Naive thymus-derived CD4-positive, alpha-beta T cell (primary cell): ENCODE measurements at regions of chr12 and their contacts with region 1.

Region 1: GRCh38 chr12:80269803-80270552 is 170.6 kb downstream of the OTOGL start:
- DNase-seq: peak in 3 of 9 donors; percentile 3 to 16 (median 4)
- ATAC-seq: no peak
- H3K4me3 ChIP-seq: no peak overlapping the region
- H3K4me3 Mint-ChIP-seq: no peak overlapping the region
- H3K27ac ChIP-seq: no peak overlapping the region
- H3K27ac Mint-ChIP-seq: no peak overlapping the region
- H3K4me1 ChIP-seq: no peaks in the 10 kb centered on the region
- H3K4me1 Mint-ChIP-seq: no peaks in the 10 kb centered on the region
- H3K27me3 ChIP-seq: no peaks in the 10 kb centered on the region
- H3K27me3 Mint-ChIP-seq: peaks cover 0 to 13% (median 0%) of the 10 kb centered on the region in 5 donors

Region 2: DNA sequence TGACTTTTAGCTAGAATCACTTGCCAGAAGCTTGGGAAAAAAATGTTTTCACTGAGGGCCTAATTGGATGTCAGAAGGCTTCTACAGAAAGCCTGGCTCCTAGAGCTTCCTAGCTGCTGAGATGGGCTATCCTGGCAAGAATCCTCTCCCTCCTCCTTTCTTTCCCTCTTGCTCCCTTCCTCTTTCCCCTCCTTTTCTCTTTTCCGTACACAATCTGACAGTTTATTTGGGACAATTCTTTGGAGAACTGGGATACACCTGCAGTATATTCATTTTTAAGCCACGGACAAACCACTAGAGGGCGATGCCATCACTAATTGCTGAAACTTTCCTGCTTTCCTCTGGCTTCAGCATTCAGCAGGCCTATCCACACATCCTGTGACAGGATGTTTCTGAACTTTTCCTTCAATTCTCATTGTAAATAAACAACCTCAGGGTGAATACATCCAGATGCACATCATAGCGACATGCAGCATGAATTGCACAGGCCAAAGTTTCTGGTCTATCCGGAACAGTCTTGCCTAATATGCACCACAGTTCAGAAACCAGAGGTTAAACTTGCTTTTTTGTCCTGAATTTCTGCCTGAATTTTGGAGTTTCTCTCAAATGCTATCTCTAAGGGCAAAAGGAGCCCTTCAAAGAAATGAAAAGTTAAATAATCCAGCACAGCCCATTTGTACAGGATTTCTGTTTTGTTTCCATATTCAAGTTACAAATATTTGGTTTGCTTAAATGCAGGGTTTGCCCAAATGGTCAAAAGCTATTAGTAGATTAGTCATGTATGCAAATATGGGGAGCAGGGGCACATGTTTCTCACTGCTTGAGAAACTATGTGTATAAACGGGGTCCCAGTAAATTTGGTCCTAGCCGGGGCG is 722.0 kb before region 1 on chr12:
- CTCF ChIA-PET with region 1: interaction called, 3 read pairs
- POLR2A ChIA-PET with region 1: no interaction called
- intact Hi-C with region 1: loop called in 1 of 2 experiments (anchors 2 kb)
- DNase-seq: peak in 2 of 9 donors; percentile 7 to 10
- ATAC-seq: no peak
- H3K4me3 ChIP-seq: no peak overlapping the region
- H3K4me3 Mint-ChIP-seq: no peak overlapping the region
- H3K27ac ChIP-seq: no peak overlapping the region
- H3K27ac Mint-ChIP-seq: no peak overlapping the region
- H3K4me1 ChIP-seq: no peaks in the 10 kb centered on the region
- H3K4me1 Mint-ChIP-seq: no peaks in the 10 kb centered on the region
- H3K27me3 ChIP-seq: no peaks in the 10 kb centered on the region
- H3K27me3 Mint-ChIP-seq: peaks cover 0 to 11% (median 0%) of the 10 kb centered on the region in 5 donors

Region 3: GRCh38 chr12:79555028-79555930 is 714.7 kb before region 1 on chr12:
- CTCF ChIA-PET with region 1: no interaction called
- POLR2A ChIA-PET with region 1: no interaction called
- intact Hi-C with region 1: loop called (anchors 2 kb)
- DNase-seq: peak in 2 of 9 donors; percentile 5 to 9
- ATAC-seq: no peak
- H3K4me3 ChIP-seq: no peak overlapping the region
- H3K4me3 Mint-ChIP-seq: no peak overlapping the region
- H3K27ac ChIP-seq: no peak overlapping the region
- H3K27ac Mint-ChIP-seq: no peak overlapping the region
- H3K4me1 ChIP-seq: no peaks in the 10 kb centered on the region
- H3K4me1 Mint-ChIP-seq: no peaks in the 10 kb centered on the region
- H3K27me3 ChIP-seq: no peaks in the 10 kb centered on the region
- H3K27me3 Mint-ChIP-seq: no peaks in the 10 kb centered on the region

Region 4: DNA sequence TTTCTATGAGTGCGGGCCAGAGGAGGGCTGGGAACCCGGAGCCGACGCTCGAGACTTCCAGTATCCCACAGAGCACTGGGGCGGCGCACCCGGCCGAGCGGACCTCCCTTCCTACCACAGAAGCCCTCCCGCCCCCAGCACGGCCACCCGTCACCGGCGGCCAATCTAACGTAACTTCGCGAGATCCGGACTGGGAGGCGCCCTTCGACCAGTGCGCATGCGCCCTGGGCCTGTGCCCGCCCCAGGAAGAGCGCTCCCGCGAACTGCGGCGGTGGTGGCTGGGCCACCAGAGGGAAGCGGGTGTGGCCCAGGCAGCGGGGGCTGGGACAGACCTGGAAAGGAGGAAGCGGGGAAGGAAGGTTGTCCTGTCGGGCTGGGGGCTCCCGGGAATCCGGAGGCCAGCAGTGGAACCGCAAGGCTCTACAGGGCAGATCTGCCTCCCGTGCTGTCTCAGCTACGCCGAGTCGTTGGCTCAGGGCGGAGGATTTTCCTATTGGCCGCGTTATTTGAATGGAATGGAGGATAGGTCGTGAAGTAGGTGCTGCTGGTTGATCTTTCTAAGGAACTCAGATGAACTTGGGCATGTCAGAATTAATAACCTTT is 334.9 kb before region 1 on chr12 and contains the start of gene PPP1R12A:
- CTCF ChIA-PET with region 1: no interaction called
- POLR2A ChIA-PET with region 1: no interaction called
- intact Hi-C with region 1: no loop called
- DNase-seq: peak; percentile 92 to 97 (median 94)
- ATAC-seq: peak; percentile 92
- H3K4me3 ChIP-seq: peak within 1 kb of the TSS; percentile 89
- H3K4me3 Mint-ChIP-seq: peak within 1 kb of the TSS; percentile 88 to 100 (median 94)
- H3K27ac ChIP-seq: peak within 1 kb of the TSS; percentile 85
- H3K27ac Mint-ChIP-seq: peak within 1 kb of the TSS; percentile 80 to 99 (median 93)
- H3K4me1 ChIP-seq: peaks cover 6 to 17% of the 10 kb centered on the region in 2 donors
- H3K4me1 Mint-ChIP-seq: peaks cover 34 to 53% (median 47%) of the 10 kb centered on the region in 7 donors
- H3K27me3 ChIP-seq: no peaks in the 10 kb centered on the region
- H3K27me3 Mint-ChIP-seq: peaks cover 0 to 2% (median 0%) of the 10 kb centered on the region in 5 donors
- total RNA-seq, gene PPP1R12A: 72.7 to 111 (median 103) TPM

Region 5: GRCh38 chr12:80031229-80031628 is 238.7 kb before region 1 on chr12:
- CTCF ChIA-PET with region 1: no interaction called
- POLR2A ChIA-PET with region 1: no interaction called
- intact Hi-C with region 1: no loop called
- DNase-seq: no peak
- ATAC-seq: no peak
- H3K4me3 ChIP-seq: no peak overlapping the region
- H3K4me3 Mint-ChIP-seq: no peak overlapping the region
- H3K27ac ChIP-seq: no peak overlapping the region
- H3K27ac Mint-ChIP-seq: no peak overlapping the region
- H3K4me1 ChIP-seq: no peaks in the 10 kb centered on the region
- H3K4me1 Mint-ChIP-seq: no peaks in the 10 kb centered on the region
- H3K27me3 ChIP-seq: no peaks in the 10 kb centered on the region
- H3K27me3 Mint-ChIP-seq: peaks cover 3 to 25% (median 10%) of the 10 kb centered on the region in 5 donors

Region 6: DNA sequence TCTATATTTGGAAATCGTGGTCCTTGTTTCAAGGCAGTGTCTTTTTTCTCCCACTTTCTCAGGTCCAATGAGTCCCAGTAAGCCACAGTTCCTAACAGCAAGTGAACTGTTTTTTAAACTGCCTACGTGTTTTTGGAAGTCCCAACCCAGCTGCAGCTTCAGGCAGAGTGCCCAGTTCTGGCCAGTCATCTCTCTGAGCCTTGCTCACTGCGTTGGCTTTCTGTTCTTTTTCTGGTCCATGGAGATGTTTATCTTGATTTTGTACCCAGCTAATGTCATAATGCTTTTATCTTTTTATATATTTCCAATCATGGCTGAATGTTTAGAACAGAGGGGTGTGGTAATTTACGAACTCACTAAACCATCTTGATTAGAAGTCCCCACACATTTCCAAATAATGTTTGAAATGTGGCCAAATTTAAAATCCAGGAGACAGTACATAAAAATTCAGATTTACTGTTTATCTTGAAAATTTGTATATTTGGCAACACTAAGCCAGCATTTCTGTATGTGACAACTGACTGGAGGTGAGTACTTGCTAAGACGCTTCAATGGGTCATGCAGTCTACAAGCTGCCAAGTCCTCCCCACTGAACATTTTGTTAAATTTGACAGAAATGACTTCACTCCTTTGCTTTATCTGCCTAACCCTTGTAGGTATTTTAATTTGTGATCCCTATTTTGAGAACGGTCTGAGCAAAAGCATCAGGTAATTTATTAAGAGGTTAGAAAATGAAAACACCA is 216.8 kb before region 1 on chr12:
- CTCF ChIA-PET with region 1: interaction called, 6 read pairs
- POLR2A ChIA-PET with region 1: no interaction called
- intact Hi-C with region 1: loop called (anchors 1 kb)
- DNase-seq: no peak
- ATAC-seq: no peak
- H3K4me3 ChIP-seq: no peak overlapping the region
- H3K4me3 Mint-ChIP-seq: no peak overlapping the region
- H3K27ac ChIP-seq: no peak overlapping the region
- H3K27ac Mint-ChIP-seq: no peak overlapping the region
- H3K4me1 ChIP-seq: no peaks in the 10 kb centered on the region
- H3K4me1 Mint-ChIP-seq: peaks cover 0 to 8% (median 7%) of the 10 kb centered on the region in 7 donors
- H3K27me3 ChIP-seq: no peaks in the 10 kb centered on the region
- H3K27me3 Mint-ChIP-seq: peaks cover 0 to 14% (median 4%) of the 10 kb centered on the region in 5 donors

Region 7: GRCh38 chr12:80241576-80242273 is 28.3 kb before region 1 on chr12:
- CTCF ChIA-PET with region 1: no interaction called
- POLR2A ChIA-PET with region 1: no interaction called
- intact Hi-C with region 1: no loop called
- DNase-seq: no peak
- ATAC-seq: no peak
- H3K4me3 ChIP-seq: no peak overlapping the region
- H3K4me3 Mint-ChIP-seq: no peak overlapping the region
- H3K27ac ChIP-seq: no peak overlapping the region
- H3K27ac Mint-ChIP-seq: no peak overlapping the region
- H3K4me1 ChIP-seq: no peaks in the 10 kb centered on the region
- H3K4me1 Mint-ChIP-seq: no peaks in the 10 kb centered on the region
- H3K27me3 ChIP-seq: no peaks in the 10 kb centered on the region
- H3K27me3 Mint-ChIP-seq: peaks cover 0 to 10% (median 9%) of the 10 kb centered on the region in 5 donors